Esophagus muscularis mucosa (tissue), 4 donors: ENCODE measurements at regions of chr16 and their contacts with region 1.

Region 1: GRCh38 chr16:57084257-57084770 is 8.1 kb upstream of the CPNE2 start:
- DNase-seq: peak; percentile 96
- H3K4me3 ChIP-seq: no peak overlapping the region
- H3K27ac ChIP-seq: no peak overlapping the region
- H3K4me1 ChIP-seq: peaks cover 0 to 11% (median 6%) of the 10 kb centered on the region in 4 donors
- H3K27me3 ChIP-seq: no peaks in the 10 kb centered on the region
- CTCF ChIP-seq: peak; percentile 91 to 100 (median 95)
- EP300 ChIP-seq: no peak
- POLR2A ChIP-seq: no peak

Region 2: DNA sequence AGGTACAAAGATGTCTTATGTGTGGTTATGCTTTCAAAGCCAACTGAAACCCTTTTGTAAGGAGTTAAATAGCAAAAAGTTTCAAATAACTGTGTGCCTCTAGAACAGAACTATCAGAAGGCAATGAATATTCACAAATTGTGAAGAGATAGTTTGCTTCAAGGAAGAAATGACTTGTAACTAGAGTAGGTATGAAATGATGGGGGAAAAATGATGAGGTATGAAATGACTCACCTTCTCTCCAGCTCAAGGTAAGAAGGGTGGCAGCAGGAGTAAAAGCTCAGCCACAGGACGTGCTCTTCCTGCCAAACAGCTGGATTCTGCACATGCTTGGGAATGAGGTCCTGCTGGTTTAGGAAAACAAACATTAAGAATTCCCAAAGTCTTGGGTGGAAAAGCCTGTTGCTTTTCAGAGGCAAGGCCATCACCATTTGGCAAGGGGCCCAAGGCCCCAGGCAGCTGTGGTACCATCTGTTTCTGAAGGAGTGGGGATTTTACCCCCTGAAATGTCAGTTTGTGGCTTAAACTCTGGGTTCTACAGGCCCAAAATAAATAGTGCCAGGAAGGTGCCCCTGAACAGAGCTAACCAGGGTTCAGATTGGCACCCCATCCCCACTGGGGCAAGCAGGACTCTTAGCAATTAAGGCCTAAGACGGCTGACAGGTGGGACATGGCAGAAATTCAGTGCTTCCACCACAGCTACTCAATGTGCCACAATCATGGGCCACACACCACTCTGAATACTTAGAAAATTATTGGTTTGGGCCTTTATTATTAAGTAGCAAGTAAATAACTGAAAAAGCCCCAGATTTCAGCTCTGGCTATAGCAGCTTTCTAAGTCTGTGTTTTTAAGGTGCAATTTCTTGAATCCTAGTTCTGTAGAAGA is 139.1 kb before region 1 on chr16:
- intact Hi-C with region 1: no loop called
- DNase-seq: no peak
- H3K4me3 ChIP-seq: no peak overlapping the region
- H3K27ac ChIP-seq: no peak overlapping the region
- H3K4me1 ChIP-seq: peaks cover 0 to 10% (median 2%) of the 10 kb centered on the region in 4 donors
- H3K27me3 ChIP-seq: no peaks in the 10 kb centered on the region
- CTCF ChIP-seq: no peak
- EP300 ChIP-seq: no peak
- POLR2A ChIP-seq: no peak

Region 3: GRCh38 chr16:57167953-57168352 is 83.6 kb after region 1 on chr16:
- intact Hi-C with region 1: loop called (anchors 2 kb)
- DNase-seq: no peak
- H3K4me3 ChIP-seq: no peak overlapping the region
- H3K27ac ChIP-seq: no peak overlapping the region
- H3K4me1 ChIP-seq: peaks cover 0 to 14% (median 8%) of the 10 kb centered on the region in 4 donors
- H3K27me3 ChIP-seq: no peaks in the 10 kb centered on the region
- CTCF ChIP-seq: peak; percentile 33 to 49 (median 43)
- EP300 ChIP-seq: no peak
- POLR2A ChIP-seq: no peak